ENCODE measurements at regions of chr12 and their contacts with region 1.

Region 1: GRCh38 chr12:110468212-110469048 is at the starts of genes FAM216A and GPN3:
- DNase-seq: peak; percentile 93 to 99
- ATAC-seq: peak; percentile 89 to 94
- H3K4me3 ChIP-seq: peak within 1 kb of the TSS; percentile 71
- H3K27ac ChIP-seq: peak within 1 kb of the TSS; percentile 90 to 96
- H3K4me1 ChIP-seq: peaks cover 16% of the 10 kb centered on the region; the same call in 2 of the 3 replicates
- CTCF ChIP-seq: no peak
- EP300 ChIP-seq: no peak
- POLR2A ChIP-seq: peak; percentile 46
- RAD21 ChIP-seq: no peak
- polyA plus RNA-seq, gene FAM216A: 27.9 and 40.6 TPM in 2 replicates
- polyA plus RNA-seq, gene GPN3: 47.2 and 63.8 TPM in 2 replicates

Region 2: DNA sequence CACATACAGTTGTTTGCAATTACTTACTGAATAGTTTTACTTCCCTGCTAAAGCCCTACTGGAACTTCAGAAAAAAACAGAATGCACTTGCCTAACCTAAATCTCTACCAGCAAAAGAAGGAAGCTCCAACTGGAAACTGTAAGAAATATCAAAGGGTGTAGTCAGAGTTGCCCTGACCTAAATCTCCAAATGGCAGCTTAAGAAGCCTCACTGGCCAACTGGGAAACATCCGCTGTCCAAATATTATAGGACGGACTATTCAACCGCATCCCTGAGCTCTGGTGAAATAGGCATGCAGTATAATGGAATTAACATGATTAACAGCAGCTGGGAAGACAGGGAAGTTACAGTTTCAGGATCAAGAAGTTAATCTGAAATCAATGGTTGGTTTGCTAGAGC is 89.2 kb before region 1 on chr12:
- CTCF ChIA-PET with region 1: no interaction called
- POLR2A ChIA-PET with region 1: no interaction called
- DNase-seq: no peak
- ATAC-seq: no peak
- H3K4me3 ChIP-seq: no peak overlapping the region
- H3K27ac ChIP-seq: no peak overlapping the region
- H3K4me1 ChIP-seq: no peaks in the 10 kb centered on the region
- CTCF ChIP-seq: no peak
- EP300 ChIP-seq: no peak
- POLR2A ChIP-seq: no peak
- RAD21 ChIP-seq: no peak

Region 3: GRCh38 chr12:110449799-110450497 is 18.5 kb before region 1 on chr12 and contains the start of gene ARPC3:
- CTCF ChIA-PET with region 1: interaction called, 133 read pairs
- POLR2A ChIA-PET with region 1: interaction called, 29 read pairs
- DNase-seq: peak; percentile 86 to 98
- ATAC-seq: peak; percentile 97 to 100
- H3K4me3 ChIP-seq: peak within 1 kb of the TSS; percentile 73
- H3K27ac ChIP-seq: peak within 1 kb of the TSS; percentile 88 to 98
- H3K4me1 ChIP-seq: peaks cover 13% of the 10 kb centered on the region; the same call in 1 of the 3 replicates
- CTCF ChIP-seq: peak; percentile 73
- EP300 ChIP-seq: no peak
- POLR2A ChIP-seq: peak; percentile 50; the same call in 1 of the 2 replicates
- RAD21 ChIP-seq: peak; percentile 84 to 89
- polyA plus RNA-seq, gene ARPC3: 83.3 and 171 TPM in 2 replicates

Region 4: GRCh38 chr12:110508071-110508586 is 39.7 kb after region 1 on chr12:
- CTCF ChIA-PET with region 1: interaction called, 15 read pairs
- POLR2A ChIA-PET with region 1: no interaction called
- DNase-seq: no peak
- ATAC-seq: no peak
- H3K4me3 ChIP-seq: no peak overlapping the region
- H3K27ac ChIP-seq: no peak overlapping the region
- H3K4me1 ChIP-seq: no peaks in the 10 kb centered on the region
- CTCF ChIP-seq: no peak
- EP300 ChIP-seq: no peak
- POLR2A ChIP-seq: no peak
- RAD21 ChIP-seq: no peak

Region 5: GRCh38 chr12:110513842-110514241 is 45.4 kb after region 1 on chr12:
- CTCF ChIA-PET with region 1: interaction called, 15 read pairs
- POLR2A ChIA-PET with region 1: no interaction called
- DNase-seq: no peak
- ATAC-seq: no peak
- H3K4me3 ChIP-seq: no peak overlapping the region
- H3K27ac ChIP-seq: no peak overlapping the region
- H3K4me1 ChIP-seq: no peaks in the 10 kb centered on the region
- CTCF ChIP-seq: no peak
- EP300 ChIP-seq: no peak
- POLR2A ChIP-seq: no peak
- RAD21 ChIP-seq: no peak

Region 6: GRCh38 chr12:110613771-110614684 is 145.6 kb after region 1 on chr12 and contains the start of gene TCTN1:
- CTCF ChIA-PET with region 1: interaction called, 10 read pairs
- POLR2A ChIA-PET with region 1: interaction called, 12 read pairs
- DNase-seq: peak; percentile 95 to 98
- ATAC-seq: peak; percentile 99 to 100
- H3K4me3 ChIP-seq: peak within 1 kb of the TSS; percentile 78
- H3K27ac ChIP-seq: peak within 1 kb of the TSS; percentile 82 to 86
- H3K4me1 ChIP-seq: peaks cover 8% of the 10 kb centered on the region; the same call in 1 of the 3 replicates
- CTCF ChIP-seq: no peak
- EP300 ChIP-seq: no peak
- POLR2A ChIP-seq: peak; percentile 86
- RAD21 ChIP-seq: no peak; a peak in 1 of 5 replicates
- polyA plus RNA-seq, gene TCTN1: 56.9 and 62.2 TPM in 2 replicates

Region 7: GRCh38 chr12:111181143-111181726 is 712.8 kb after region 1 on chr12:
- CTCF ChIA-PET with region 1: no interaction called
- POLR2A ChIA-PET with region 1: no interaction called
- DNase-seq: no peak
- ATAC-seq: no peak
- H3K4me3 ChIP-seq: no peak overlapping the region
- H3K27ac ChIP-seq: no peak overlapping the region
- H3K4me1 ChIP-seq: no peaks in the 10 kb centered on the region
- CTCF ChIP-seq: no peak
- EP300 ChIP-seq: no peak
- POLR2A ChIP-seq: no peak
- RAD21 ChIP-seq: no peak